ENCODE measurements at regions of chr9 and their contacts with region 1.

Region 1: GRCh38 chr9:2469681-2470221 is 151.8 kb upstream of the VLDLR start:
- DNase-seq: peak in 1 of 2 experiments; percentile 22
- H3K4me3 ChIP-seq: no peak overlapping the region
- H3K27ac ChIP-seq: no peak overlapping the region
- H3K4me1 ChIP-seq: peaks cover 16% of the 10 kb centered on the region
- H3K27me3 ChIP-seq: no peaks in the 10 kb centered on the region
- CTCF ChIP-seq: no peak; the same call in 1 of the 2 replicates

Region 2: DNA sequence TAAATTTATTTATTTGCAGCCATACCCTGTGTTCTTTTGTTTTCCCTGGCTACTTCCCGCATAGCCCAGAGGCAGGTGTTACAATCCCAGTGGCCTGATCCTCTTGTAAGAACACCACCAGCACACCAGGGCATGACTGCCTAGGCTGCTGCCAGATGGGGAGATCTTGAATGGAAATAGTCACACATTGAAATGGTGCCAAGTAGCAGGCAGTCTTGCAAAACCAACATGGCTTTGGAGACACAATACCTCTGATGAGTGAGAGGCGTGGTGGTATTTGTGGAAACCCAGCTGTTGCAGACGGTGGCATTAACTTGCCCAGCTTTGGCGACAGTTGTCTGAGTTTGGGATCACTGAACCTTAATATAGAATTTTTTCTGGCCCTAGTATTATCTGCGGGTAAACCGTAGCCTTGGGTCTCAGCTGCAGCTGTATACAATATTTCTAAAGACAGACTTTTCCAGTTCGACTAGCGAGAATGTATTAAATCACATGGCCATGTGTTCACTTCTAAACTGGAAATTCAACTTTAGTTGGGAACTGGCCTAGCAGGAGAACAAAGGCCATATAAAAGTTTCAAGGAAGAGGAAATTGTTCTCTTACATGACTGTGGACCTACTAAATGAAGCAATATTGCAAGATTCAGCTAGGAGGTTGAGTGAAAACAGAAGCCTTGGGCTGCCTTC is 177.6 kb before region 1 on chr9:
- CTCF ChIA-PET with region 1: no interaction called
- POLR2A ChIA-PET with region 1: no interaction called
- intact Hi-C with region 1: loop called (anchors 5 kb)
- DNase-seq: peak; percentile 49 to 92
- H3K4me3 ChIP-seq: peak overlapping the region; percentile 34; the same call in 1 of the 2 replicates
- H3K27ac ChIP-seq: peak overlapping the region; percentile 97
- H3K4me1 ChIP-seq: peaks cover 27% of the 10 kb centered on the region
- H3K27me3 ChIP-seq: no peaks in the 10 kb centered on the region
- CTCF ChIP-seq: no peak

Region 3: GRCh38 chr9:2411459-2412215 is 58.1 kb before region 1 on chr9:
- CTCF ChIA-PET with region 1: no interaction called
- POLR2A ChIA-PET with region 1: interaction called, 3 read pairs
- intact Hi-C with region 1: loop called (anchors 5 kb)
- DNase-seq: peak; percentile 18 to 38
- H3K4me3 ChIP-seq: no peak overlapping the region
- H3K27ac ChIP-seq: no peak overlapping the region
- H3K4me1 ChIP-seq: no peaks in the 10 kb centered on the region
- H3K27me3 ChIP-seq: no peaks in the 10 kb centered on the region
- CTCF ChIP-seq: no peak

Region 4: GRCh38 chr9:2570615-2571479 is 101.1 kb after region 1 on chr9:
- CTCF ChIA-PET with region 1: no interaction called
- POLR2A ChIA-PET with region 1: no interaction called
- intact Hi-C with region 1: loop called (anchors 1 kb)
- DNase-seq: peak; percentile 90 to 97
- H3K4me3 ChIP-seq: no peak overlapping the region; the same call in 1 of the 2 replicates
- H3K27ac ChIP-seq: peak overlapping the region; percentile 77
- H3K4me1 ChIP-seq: peaks cover 61% of the 10 kb centered on the region
- H3K27me3 ChIP-seq: no peaks in the 10 kb centered on the region
- CTCF ChIP-seq: no peak

Region 5: DNA sequence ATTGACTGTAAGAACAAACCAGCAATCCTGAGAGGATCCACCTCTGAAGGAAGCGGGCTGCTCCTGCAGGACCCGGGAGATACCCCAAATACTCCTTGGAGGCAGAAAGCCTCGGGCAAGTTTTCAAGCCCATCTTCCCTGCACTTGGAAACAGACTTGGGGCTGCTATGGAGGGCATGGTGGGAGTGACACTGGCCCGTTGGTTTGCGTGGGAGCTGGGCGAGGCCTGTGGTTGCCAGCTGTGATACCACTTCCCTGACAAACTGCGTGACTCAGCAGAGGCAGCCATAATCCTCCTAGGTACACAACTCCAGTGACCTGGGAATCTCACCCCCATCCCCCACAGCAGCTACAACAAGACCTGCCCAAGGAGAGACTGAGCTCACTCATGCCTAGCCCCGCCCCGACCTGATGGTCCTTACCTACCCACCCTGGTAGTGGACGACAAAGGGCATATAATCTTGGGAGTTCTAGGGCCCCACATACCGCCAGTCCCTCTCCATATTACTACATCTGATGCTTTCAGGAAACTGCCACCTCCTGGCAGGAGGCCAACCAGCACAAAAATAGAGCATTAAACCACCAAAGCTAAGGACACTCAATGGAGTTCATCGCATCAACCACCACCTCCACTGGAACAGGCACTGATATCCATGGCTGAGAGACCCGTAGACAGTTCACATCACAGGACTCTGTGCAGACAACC is 113.7 kb after region 1 on chr9:
- CTCF ChIA-PET with region 1: no interaction called
- POLR2A ChIA-PET with region 1: no interaction called
- intact Hi-C with region 1: no loop called
- DNase-seq: no peak
- H3K4me3 ChIP-seq: no peak overlapping the region
- H3K27ac ChIP-seq: no peak overlapping the region
- H3K4me1 ChIP-seq: no peaks in the 10 kb centered on the region
- H3K27me3 ChIP-seq: no peaks in the 10 kb centered on the region
- CTCF ChIP-seq: no peak

Measured in PC-9 (cell line).